GM12878 (cell line): ENCODE measurements at regions of chr11 and their contacts with region 1.

Region 1: DNA sequence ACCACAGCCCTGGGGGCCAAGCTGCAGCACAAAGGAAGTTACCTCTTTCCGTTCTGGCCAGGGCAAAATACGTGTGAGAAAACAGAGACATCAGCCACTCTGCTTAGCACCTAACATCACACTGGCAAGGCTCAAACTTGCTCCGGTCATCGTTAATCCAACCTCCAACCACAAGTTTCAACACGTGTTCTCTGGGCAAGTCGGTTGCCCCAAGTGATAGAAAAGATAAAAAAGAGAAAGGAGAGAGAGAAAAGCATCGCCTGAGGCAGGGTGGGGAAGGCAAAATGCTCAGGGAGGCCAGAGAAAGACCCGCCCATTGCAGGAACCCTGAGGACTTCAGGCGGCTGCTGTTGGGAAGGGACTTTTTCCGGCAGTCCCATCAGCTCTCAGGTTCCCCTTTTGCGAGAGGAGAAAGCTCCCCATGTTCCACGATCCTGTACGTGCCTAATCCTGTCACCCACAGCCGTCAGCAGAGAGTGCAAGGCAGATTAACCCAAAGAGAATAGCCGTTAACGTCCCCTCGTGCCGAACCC is 18.5 kb upstream of the B4GALNT4 start:
- DNase-seq: peak; percentile 78
- ATAC-seq: peak; percentile 73
- H3K4me3 ChIP-seq: no peak overlapping the region
- H3K27ac ChIP-seq: peak overlapping the region; percentile 81
- H3K4me1 ChIP-seq: peaks cover 64% of the 10 kb centered on the region
- H3K27me3 ChIP-seq: no peaks in the 10 kb centered on the region
- CTCF ChIP-seq: no peak
- EP300 ChIP-seq: no peak
- POLR2A ChIP-seq: peak; percentile 58; the same call in 1 of the 2 replicates
- RAD21 ChIP-seq: no peak

Region 2: GRCh38 chr11:278001-278951 is 72.5 kb before region 1 on chr11 and contains the start of gene NLRP6:
- CTCF ChIA-PET with region 1: no interaction called
- POLR2A ChIA-PET with region 1: no interaction called
- RAD21 ChIA-PET with region 1: no interaction called
- SMC1A ChIA-PET with region 1: no interaction called
- in situ Hi-C with region 1: no loop called
- intact Hi-C with region 1: no loop called
- DNase-seq: no peak
- ATAC-seq: no peak
- H3K4me3 ChIP-seq: no peak within 1 kb of the TSS
- H3K27ac ChIP-seq: no peak within 1 kb of the TSS
- H3K4me1 ChIP-seq: no peaks in the 10 kb centered on the region; the same call in 1 of the 2 replicates
- H3K27me3 ChIP-seq: peaks cover 15 to 20% of the 10 kb centered on the region in 2 experiments
- CTCF ChIP-seq: no peak
- EP300 ChIP-seq: no peak
- POLR2A ChIP-seq: no peak
- RAD21 ChIP-seq: no peak
- polyA plus RNA-seq, gene NLRP6: not detected

Region 3: GRCh38 chr11:297586-298405 is 53.0 kb before region 1 on chr11:
- CTCF ChIA-PET with region 1: no interaction called
- POLR2A ChIA-PET with region 1: no interaction called
- RAD21 ChIA-PET with region 1: no interaction called
- SMC1A ChIA-PET with region 1: no interaction called
- in situ Hi-C with region 1: no loop called
- intact Hi-C with region 1: no loop called
- DNase-seq: no peak
- ATAC-seq: peak; percentile 64
- H3K4me3 ChIP-seq: no peak overlapping the region
- H3K27ac ChIP-seq: no peak overlapping the region
- H3K4me1 ChIP-seq: peaks cover 3% of the 10 kb centered on the region
- H3K27me3 ChIP-seq: no peaks in the 10 kb centered on the region; a peak in 1 of 4 replicates
- CTCF ChIP-seq: no peak
- EP300 ChIP-seq: no peak
- POLR2A ChIP-seq: peak; percentile 36
- RAD21 ChIP-seq: no peak

Region 4: DNA sequence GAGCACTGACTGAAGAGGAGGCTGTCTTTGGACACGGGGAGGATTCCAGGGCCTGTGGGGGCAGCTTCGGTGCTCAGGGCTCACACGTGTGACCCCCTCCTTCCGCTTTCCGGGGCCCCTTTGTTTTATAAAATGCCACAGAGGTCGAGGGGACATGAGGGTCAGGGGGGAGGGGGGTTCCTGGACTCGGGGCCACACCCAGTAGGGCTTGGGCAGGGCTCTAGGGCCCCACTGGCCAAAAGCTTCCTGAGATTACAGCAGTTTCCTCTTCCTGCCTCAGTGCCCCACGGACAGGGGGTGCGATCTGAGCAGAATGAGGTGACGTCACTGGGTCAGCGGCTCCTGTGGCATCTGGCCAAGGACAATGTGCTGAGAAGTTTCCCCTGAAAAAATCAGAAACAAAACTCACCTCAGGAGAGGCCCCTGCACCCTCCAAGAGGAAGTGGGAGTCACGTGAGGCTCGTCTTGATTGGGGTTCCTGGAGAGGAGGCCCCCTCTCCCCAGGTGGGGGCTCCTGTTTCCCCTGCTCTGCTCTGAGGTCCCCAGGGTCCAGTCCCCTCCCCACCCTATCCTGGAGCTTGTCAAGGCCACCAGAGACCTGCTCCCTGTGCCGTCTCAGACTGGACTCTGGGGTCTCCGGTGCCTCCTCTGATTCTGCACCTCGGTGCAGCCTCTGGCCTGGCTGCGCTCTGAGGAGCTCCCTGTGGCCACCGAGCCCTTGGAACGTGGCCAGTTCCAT is 23.8 kb before region 1 on chr11:
- CTCF ChIA-PET with region 1: interaction called, 36 read pairs
- POLR2A ChIA-PET with region 1: interaction called, 86 read pairs
- RAD21 ChIA-PET with region 1: interaction called, 68 read pairs
- SMC1A ChIA-PET with region 1: interaction called, 44 read pairs
- in situ Hi-C with region 1: no loop called
- intact Hi-C with region 1: loop called (anchors 1 kb)
- DNase-seq: peak; percentile 96
- ATAC-seq: peak; percentile 78
- H3K4me3 ChIP-seq: peak overlapping the region; percentile 56
- H3K27ac ChIP-seq: peak overlapping the region; percentile 100
- H3K4me1 ChIP-seq: peaks cover 51% of the 10 kb centered on the region
- H3K27me3 ChIP-seq: no peaks in the 10 kb centered on the region
- CTCF ChIP-seq: no peak
- EP300 ChIP-seq: peak; percentile 87 to 89
- POLR2A ChIP-seq: peak; percentile 70
- RAD21 ChIP-seq: no peak

Region 5: GRCh38 chr11:334264-334994 is 16.4 kb before region 1 on chr11:
- CTCF ChIA-PET with region 1: interaction called, 36 read pairs
- POLR2A ChIA-PET with region 1: interaction called, 86 read pairs
- RAD21 ChIA-PET with region 1: interaction called, 68 read pairs
- SMC1A ChIA-PET with region 1: interaction called, 44 read pairs
- in situ Hi-C with region 1: no loop called
- intact Hi-C with region 1: no loop called
- DNase-seq: no peak
- ATAC-seq: no peak
- H3K4me3 ChIP-seq: no peak overlapping the region
- H3K27ac ChIP-seq: no peak overlapping the region
- H3K4me1 ChIP-seq: peaks cover 25% of the 10 kb centered on the region
- H3K27me3 ChIP-seq: no peaks in the 10 kb centered on the region
- CTCF ChIP-seq: no peak
- EP300 ChIP-seq: no peak
- POLR2A ChIP-seq: no peak
- RAD21 ChIP-seq: no peak

Region 6: GRCh38 chr11:695538-696248 is 344.9 kb after region 1 on chr11 and contains the start of gene TMEM80:
- CTCF ChIA-PET with region 1: no interaction called
- POLR2A ChIA-PET with region 1: no interaction called
- RAD21 ChIA-PET with region 1: no interaction called
- SMC1A ChIA-PET with region 1: no interaction called
- in situ Hi-C with region 1: no loop called
- intact Hi-C with region 1: no loop called
- DNase-seq: peak; percentile 68
- ATAC-seq: peak; percentile 86
- H3K4me3 ChIP-seq: peak within 1 kb of the TSS; percentile 83
- H3K27ac ChIP-seq: peak within 1 kb of the TSS; percentile 96
- H3K4me1 ChIP-seq: peaks cover 24% of the 10 kb centered on the region
- H3K27me3 ChIP-seq: no peaks in the 10 kb centered on the region
- CTCF ChIP-seq: no peak
- EP300 ChIP-seq: no peak
- POLR2A ChIP-seq: peak; percentile 89
- RAD21 ChIP-seq: no peak
- polyA plus RNA-seq, gene TMEM80: 6.7 to 8.8 TPM